HEK293 (cell line): ENCODE measurements at regions of chr6 and their contacts with region 1.

Region 1: DNA sequence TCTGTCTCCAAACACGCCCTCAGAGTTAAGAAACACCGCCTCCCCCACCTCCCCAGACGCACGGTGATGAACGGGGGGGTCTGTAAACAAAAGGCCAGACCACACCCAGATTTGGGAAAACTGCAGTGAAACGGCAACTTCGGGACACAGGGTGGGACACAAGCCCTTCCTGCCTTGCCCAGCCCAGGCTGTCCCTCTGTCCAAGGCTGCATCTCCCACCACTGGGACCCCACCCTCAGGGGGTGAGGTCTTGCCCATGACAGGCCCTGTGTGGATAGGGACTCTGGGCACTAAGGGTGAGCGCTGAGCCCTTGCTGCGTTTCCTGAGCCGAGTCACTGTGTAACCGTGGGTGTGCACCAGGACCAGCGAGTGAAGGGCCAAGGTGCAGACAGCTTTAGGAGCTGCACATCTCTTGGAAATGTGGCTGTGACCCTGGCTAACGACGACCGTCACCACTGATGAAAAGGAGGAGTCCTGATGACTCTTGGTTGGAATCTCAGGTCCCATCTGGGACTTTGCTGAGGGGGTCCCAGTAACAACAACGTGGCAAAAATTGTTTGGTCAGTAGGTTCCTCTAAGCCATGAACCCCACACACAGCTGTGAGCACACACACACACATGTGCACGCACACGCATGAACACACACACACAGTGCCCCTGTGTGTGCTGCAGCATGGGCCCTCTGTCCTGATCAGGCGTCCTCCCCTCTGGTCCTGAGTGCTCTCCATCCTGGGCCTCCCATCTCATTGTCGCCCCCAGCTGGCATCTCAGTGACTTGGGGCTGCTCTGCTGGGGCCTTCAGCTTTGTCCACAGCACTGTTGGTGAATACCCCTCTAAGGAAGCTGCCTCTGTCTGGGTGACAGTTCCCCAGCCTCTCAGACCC is 100.6 kb downstream of the RAMACL start:
- H3K4me3 ChIP-seq: no peak overlapping the region
- H3K27ac ChIP-seq: no peak overlapping the region
- H3K4me1 ChIP-seq: peaks cover 3% of the 10 kb centered on the region
- CTCF ChIP-seq: no peak

Region 2: GRCh38 chr6:165950316-165950715 is 535.6 kb before region 1 on chr6:
- CTCF ChIA-PET with region 1: no interaction called
- POLR2A ChIA-PET with region 1: no interaction called
- H3K4me3 ChIP-seq: no peak overlapping the region
- H3K27ac ChIP-seq: no peak overlapping the region
- H3K4me1 ChIP-seq: no peaks in the 10 kb centered on the region
- CTCF ChIP-seq: no peak

Region 3: DNA sequence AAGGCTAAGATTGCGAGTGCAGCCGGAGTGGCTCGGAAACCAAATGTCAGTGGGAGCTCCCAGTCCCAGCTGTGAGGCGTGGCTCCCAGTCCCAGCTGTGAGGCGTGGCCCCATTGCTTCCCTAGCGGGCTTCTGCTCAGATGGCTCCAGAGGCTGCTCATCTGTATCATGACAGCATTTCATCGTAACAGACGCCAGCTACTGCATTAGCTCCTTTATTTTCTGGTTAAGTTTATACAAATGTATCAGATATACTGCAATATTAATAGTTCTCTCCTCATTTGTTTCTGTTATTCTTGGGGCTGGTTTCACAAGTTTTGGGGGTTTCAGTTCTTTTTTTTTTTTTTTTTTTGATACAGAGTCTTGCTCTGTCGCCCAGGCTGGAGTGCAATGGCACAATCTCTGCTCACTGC is 283.6 kb before region 1 on chr6:
- CTCF ChIA-PET with region 1: no interaction called
- POLR2A ChIA-PET with region 1: no interaction called
- H3K4me3 ChIP-seq: no peak overlapping the region
- H3K27ac ChIP-seq: no peak overlapping the region
- H3K4me1 ChIP-seq: peaks cover 3% of the 10 kb centered on the region
- CTCF ChIP-seq: no peak

Region 4: GRCh38 chr6:167073679-167074274 is 587.9 kb after region 1 on chr6:
- CTCF ChIA-PET with region 1: interaction called, 10 read pairs
- POLR2A ChIA-PET with region 1: no interaction called
- H3K4me3 ChIP-seq: no peak overlapping the region
- H3K27ac ChIP-seq: no peak overlapping the region
- H3K4me1 ChIP-seq: no peaks in the 10 kb centered on the region
- CTCF ChIP-seq: no peak